Left ventricle myocardium inferior (tissue), 1 donor: ENCODE measurements at regions of chr2 and their contacts with region 1.

Region 1: GRCh38 chr2:134118279-134119116 is 135.4 kb upstream of the MGAT5 start:
- DNase-seq: peak; percentile 75
- H3K4me3 ChIP-seq: peak overlapping the region; percentile 99
- H3K27ac ChIP-seq: peak overlapping the region; percentile 96
- H3K4me1 ChIP-seq: peaks cover 55% of the 10 kb centered on the region
- H3K27me3 ChIP-seq: no peaks in the 10 kb centered on the region
- CTCF ChIP-seq: peak; percentile 90

Region 2: GRCh38 chr2:134207564-134208209 is 89.2 kb after region 1 on chr2:
- intact Hi-C with region 1: loop called (anchors 5 kb)
- DNase-seq: peak; percentile 45
- H3K4me3 ChIP-seq: no peak overlapping the region
- H3K27ac ChIP-seq: peak overlapping the region; percentile 64
- H3K4me1 ChIP-seq: peaks cover 66% of the 10 kb centered on the region
- H3K27me3 ChIP-seq: no peaks in the 10 kb centered on the region
- CTCF ChIP-seq: peak; percentile 75

Region 3: DNA sequence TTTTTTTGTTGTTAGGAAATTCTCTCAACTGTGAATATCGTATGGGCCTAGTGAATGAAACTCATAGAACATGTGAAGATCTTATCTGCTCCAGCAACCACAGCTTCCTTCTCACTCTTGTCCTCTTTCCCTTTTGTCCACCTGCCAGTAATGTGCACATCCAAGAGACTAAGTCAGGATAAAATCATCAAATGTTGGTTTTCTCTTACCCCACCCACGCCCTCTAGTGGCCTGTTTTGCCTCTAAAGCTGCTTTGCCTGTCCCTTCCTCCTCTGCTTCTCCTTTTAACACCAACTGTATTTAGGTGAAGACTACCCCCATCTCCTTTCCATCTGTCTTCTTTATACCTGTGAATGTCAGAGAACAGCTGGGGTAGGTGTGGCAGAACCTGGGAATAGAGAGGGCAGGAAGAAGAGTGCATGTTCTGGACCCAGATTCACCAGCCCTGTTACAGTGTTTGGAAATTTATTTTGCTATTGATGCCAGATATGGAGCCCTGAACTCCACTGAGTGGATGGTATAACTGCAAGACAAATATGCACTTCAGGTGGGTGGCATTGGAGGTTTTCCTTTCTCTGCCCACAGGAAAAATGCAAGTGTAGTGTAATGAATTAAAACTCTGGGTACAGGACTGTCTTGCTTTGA is 127.0 kb after region 1 on chr2:
- intact Hi-C with region 1: loop called (anchors 10 kb)
- DNase-seq: peak; percentile 72
- H3K4me3 ChIP-seq: no peak overlapping the region
- H3K27ac ChIP-seq: peak overlapping the region; percentile 36
- H3K4me1 ChIP-seq: peaks cover 91% of the 10 kb centered on the region
- H3K27me3 ChIP-seq: no peaks in the 10 kb centered on the region
- CTCF ChIP-seq: peak; percentile 73

Region 4: DNA sequence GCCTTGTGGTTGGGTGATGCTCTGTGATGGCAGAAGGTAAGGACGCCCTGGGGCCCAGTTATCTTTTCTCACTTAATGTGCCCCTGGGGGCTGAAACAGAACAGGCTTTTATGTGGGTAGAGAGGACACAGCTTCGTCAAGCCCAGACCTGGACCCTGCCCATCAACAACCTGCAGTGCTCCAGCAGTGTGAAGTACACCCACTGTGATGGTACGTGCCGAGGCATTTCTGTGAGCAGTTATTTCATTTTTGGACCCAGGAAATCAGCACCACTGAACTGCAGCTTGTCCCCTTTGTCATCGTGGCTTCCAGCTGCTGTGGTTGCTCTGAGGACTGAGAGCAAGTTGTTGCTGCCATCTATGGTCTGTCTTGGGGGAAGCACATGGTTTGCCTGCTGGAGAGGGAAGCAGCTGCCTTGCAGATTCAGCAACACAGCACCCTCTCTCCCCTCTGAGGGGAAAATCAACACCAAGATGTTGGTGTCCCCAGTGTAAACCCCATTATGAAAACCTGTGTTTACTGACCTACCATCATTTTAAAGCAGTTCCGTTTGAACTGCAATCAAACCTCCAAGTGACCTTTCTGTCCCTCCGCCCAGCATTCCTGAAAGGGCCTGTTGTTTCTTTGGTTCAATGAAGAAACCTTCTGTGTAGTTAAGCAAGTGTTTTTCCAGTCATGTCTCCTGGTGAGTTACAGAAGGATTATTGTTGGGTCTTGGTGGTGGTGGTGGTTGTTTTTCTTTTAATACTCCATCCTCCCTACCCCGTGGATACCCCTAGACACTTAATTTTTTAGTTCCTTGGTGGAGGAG is 293.5 kb after region 1 on chr2:
- intact Hi-C with region 1: loop called (anchors 2 kb)
- DNase-seq: peak; percentile 47
- H3K4me3 ChIP-seq: no peak overlapping the region
- H3K27ac ChIP-seq: peak overlapping the region; percentile 67
- H3K4me1 ChIP-seq: peaks cover 53% of the 10 kb centered on the region
- H3K27me3 ChIP-seq: no peaks in the 10 kb centered on the region
- CTCF ChIP-seq: peak; percentile 81